Endothelial cell of umbilical vein (primary cell): ENCODE measurements at regions of chr1 and their contacts with region 1.

Region 1: GRCh38 chr1:39127513-39127912 is 77.0 kb upstream of the MACF1 start:
- DNase-seq: peak; percentile 99
- H3K4me3 ChIP-seq: peak overlapping the region in 1 of 3 experiments; percentile 13
- H3K27ac ChIP-seq: peak overlapping the region; percentile 76
- H3K4me1 ChIP-seq: peaks cover 73% of the 10 kb centered on the region
- H3K27me3 ChIP-seq: no peaks in the 10 kb centered on the region
- CTCF ChIP-seq: no peak
- POLR2A ChIP-seq: peak; percentile 23

Region 2: DNA sequence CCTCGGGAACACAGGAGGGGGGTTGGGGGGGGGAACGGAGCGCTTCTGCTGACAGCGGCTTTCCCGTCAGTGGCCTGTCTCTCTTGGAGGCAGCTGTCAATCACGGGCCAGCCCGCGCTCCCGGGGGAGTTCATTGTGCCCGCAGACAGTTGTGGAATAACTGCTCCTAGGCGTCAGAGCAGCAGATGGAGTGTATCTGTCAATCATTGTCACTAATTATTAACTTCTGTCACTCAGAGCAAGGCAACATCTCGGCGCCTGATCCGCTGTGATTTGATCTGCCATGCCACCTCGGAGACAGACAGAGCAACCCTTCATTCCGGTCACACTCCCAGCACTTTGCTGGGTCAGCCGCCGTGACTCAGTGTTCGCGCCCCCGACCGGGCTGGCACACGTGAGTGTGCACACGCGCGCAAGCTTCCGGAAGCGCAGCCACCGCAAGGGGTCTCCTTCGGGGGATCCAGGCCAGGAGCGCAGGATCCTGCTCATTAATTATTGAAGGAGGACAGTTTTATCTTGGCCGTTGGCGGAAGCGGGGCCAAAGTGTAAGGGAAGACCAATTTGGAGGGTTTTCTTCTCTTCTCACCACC is 343.8 kb before region 1 on chr1:
- CTCF ChIA-PET with region 1: no interaction called
- POLR2A ChIA-PET with region 1: no interaction called
- dilution Hi-C with region 1: no loop called
- intact Hi-C with region 1: no loop called
- DNase-seq: no peak
- H3K4me3 ChIP-seq: no peak overlapping the region
- H3K27ac ChIP-seq: no peak overlapping the region
- H3K4me1 ChIP-seq: no peaks in the 10 kb centered on the region
- H3K27me3 ChIP-seq: peaks cover 20 to 22% of the 10 kb centered on the region in 2 experiments
- CTCF ChIP-seq: no peak
- POLR2A ChIP-seq: no peak

Region 3: GRCh38 chr1:39110325-39110851 is 17.1 kb before region 1 on chr1:
- CTCF ChIA-PET with region 1: interaction called, 82 read pairs
- POLR2A ChIA-PET with region 1: interaction called, 6 read pairs
- dilution Hi-C with region 1: no loop called
- intact Hi-C with region 1: loop called (anchors 1 kb)
- DNase-seq: peak; percentile 87
- H3K4me3 ChIP-seq: no peak overlapping the region
- H3K27ac ChIP-seq: peak overlapping the region; percentile 88
- H3K4me1 ChIP-seq: peaks cover 58% of the 10 kb centered on the region
- H3K27me3 ChIP-seq: no peaks in the 10 kb centered on the region
- CTCF ChIP-seq: no peak
- POLR2A ChIP-seq: no peak

Region 4: GRCh38 chr1:39116868-39117728 is 10.4 kb before region 1 on chr1:
- CTCF ChIA-PET with region 1: interaction called, 82 read pairs
- POLR2A ChIA-PET with region 1: no interaction called
- dilution Hi-C with region 1: no loop called
- intact Hi-C with region 1: loop called (anchors 1 kb)
- DNase-seq: peak; percentile 69
- H3K4me3 ChIP-seq: peak overlapping the region in 1 of 3 experiments; percentile 22
- H3K27ac ChIP-seq: peak overlapping the region; percentile 40
- H3K4me1 ChIP-seq: peaks cover 45% of the 10 kb centered on the region
- H3K27me3 ChIP-seq: no peaks in the 10 kb centered on the region
- CTCF ChIP-seq: no peak
- POLR2A ChIP-seq: no peak